Gastrocnemius medialis (tissue), 4 donors: ENCODE measurements at regions of chr5 and their contacts with region 1.

Region 1: DNA sequence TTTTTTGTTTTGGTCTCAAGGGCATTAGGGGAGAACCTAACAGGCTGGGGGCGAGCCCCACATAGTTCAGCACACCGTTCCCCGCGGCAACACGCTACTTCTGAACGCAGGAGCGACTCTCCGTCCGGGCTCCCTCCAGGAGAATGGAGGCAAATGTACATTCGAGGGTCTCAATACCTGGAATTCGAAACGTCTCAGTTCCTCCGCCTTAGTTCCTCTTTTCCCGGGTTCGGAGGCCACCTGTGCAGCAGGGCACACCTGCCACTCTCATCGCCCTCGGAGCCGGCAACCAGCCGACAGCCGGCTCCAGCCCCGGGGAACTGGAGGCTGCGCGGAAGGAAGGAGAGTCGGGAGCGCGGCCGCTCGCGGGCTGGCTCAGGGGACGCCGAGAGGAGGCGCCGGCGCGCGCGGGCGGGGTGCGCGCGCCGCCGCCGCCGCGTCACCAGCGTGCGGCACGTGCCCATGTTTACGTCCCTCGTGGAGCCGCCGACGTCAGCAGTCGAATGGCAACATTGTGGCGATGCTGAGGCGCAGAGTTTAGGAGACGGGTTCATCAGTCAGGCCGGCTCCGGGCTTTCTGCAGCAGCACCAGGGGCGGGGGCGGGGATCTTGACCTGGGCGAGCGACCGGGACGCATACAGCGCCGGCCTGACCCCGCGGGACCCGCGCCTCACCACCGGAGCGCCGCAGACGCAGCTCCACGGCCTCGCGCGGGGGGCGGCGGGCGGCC is at the start of gene JMY:
- DNase-seq: peak; percentile 78 to 81
- ATAC-seq: peak; percentile 83 to 86
- H3K4me3 ChIP-seq: peak within 1 kb of the TSS; percentile 70 to 96 (median 86)
- H3K27ac ChIP-seq: peak within 1 kb of the TSS; percentile 85 to 96 (median 95)
- H3K4me1 ChIP-seq: peaks cover 31 to 33% of the 10 kb centered on the region in 2 donors
- H3K27me3 ChIP-seq: no peaks in the 10 kb centered on the region
- CTCF ChIP-seq: peak in 1 of 5 experiments; percentile 37
- POLR2A ChIP-seq: peak; percentile 92 to 98
- total RNA-seq, gene JMY: 11.4 to 26.7 (median 16.8) TPM

Region 2: GRCh38 chr5:79301046-79301712 is 65.4 kb after region 1 on chr5:
- in situ Hi-C with region 1: no loop called
- intact Hi-C with region 1: no loop called
- DNase-seq: no peak
- ATAC-seq: no peak
- H3K4me3 ChIP-seq: no peak overlapping the region
- H3K27ac ChIP-seq: no peak overlapping the region
- H3K4me1 ChIP-seq: peaks cover 0 to 13% of the 10 kb centered on the region in 2 donors
- H3K27me3 ChIP-seq: no peaks in the 10 kb centered on the region
- CTCF ChIP-seq: no peak
- POLR2A ChIP-seq: no peak

Region 3: DNA sequence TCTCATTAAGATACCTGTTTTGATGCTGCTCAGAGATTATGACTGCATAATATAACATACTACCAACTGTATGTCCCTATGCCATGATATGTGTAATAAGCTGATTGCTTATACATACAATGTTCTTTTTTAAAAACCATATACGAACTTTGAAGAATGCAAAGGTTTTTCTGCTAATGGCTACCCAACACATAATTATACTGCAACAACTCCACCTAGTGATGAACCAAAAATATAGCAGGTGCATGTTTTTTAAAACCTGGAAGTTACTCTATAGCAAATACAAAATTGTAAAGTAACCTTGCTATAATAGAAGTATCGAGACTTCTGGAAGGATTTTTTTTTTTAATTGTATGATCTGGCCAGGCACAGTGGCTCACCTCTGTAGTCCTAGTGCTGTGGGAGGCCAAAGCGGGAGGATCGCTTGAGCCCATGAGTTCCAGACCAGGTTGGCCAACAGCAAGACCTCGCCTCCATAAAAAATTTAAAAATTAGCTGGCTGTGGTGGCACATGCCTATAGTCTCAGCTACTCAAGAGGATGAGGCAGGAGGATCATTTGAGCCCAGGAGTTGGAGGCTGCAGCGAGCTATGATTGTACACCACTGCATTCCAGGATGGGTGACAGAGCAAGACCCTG is 229.0 kb after region 1 on chr5:
- in situ Hi-C with region 1: loop called in 1 of 4 experiments (anchors 25 kb)
- intact Hi-C with region 1: loop called (anchors 5 kb)
- DNase-seq: no peak
- ATAC-seq: peak in 1 of 2 donors; percentile 60
- H3K4me3 ChIP-seq: no peak overlapping the region
- H3K27ac ChIP-seq: no peak overlapping the region
- H3K4me1 ChIP-seq: peaks cover 3 to 17% of the 10 kb centered on the region in 2 donors
- H3K27me3 ChIP-seq: no peaks in the 10 kb centered on the region
- CTCF ChIP-seq: peak in 4 of 5 experiments; percentile 18 to 60 (median 48)
- POLR2A ChIP-seq: no peak

Region 4: GRCh38 chr5:79514391-79515105 is 278.7 kb after region 1 on chr5:
- in situ Hi-C with region 1: no loop called
- intact Hi-C with region 1: loop called (anchors 1 kb)
- DNase-seq: peak; percentile 89 to 96
- ATAC-seq: peak; percentile 81 to 84
- H3K4me3 ChIP-seq: peak overlapping the region; percentile 78 to 91 (median 82)
- H3K27ac ChIP-seq: peak overlapping the region; percentile 93 to 97 (median 96)
- H3K4me1 ChIP-seq: peaks cover 9 to 18% of the 10 kb centered on the region in 2 donors
- H3K27me3 ChIP-seq: no peaks in the 10 kb centered on the region
- CTCF ChIP-seq: no peak
- POLR2A ChIP-seq: peak; percentile 34 to 97

Region 5: DNA sequence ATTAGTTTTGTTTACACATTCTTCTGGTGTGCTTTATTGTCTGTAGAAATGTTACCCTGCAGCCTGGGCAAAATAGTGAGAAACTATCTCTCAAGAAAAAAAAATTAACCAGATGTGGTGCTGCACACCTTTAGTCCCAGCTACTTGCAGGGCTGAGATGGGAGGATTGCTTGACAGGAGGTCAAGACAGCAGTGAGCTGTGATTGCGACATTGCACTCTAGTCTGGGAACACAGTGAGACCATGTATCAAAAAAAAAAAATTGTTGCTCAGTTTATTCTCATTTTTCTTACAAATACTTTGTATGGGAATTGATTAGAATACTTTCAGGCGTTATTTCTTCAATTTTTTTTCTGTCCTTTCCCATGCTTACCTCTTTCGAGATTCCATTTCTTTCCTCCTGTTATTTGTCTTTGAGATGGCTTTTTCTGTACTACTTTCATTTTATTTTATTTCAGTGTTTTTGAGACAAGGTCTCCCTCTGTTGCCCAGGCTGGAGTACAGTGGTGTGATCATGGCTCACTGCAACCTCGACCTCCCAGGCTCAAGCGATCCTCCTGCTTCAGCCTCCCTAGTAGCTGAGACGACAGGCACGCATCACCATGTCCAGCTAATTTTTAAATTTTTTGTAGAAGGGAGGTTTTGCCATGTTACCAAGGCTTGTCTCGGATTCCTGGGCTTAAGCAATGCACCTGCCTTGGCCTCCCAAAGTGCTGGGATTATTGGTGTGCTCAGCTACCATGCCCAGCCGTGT is 401.4 kb after region 1 on chr5:
- in situ Hi-C with region 1: loop called in 1 of 4 experiments (anchors 25 kb)
- intact Hi-C with region 1: no loop called
- DNase-seq: no peak
- ATAC-seq: no peak
- H3K4me3 ChIP-seq: no peak overlapping the region
- H3K27ac ChIP-seq: no peak overlapping the region
- H3K4me1 ChIP-seq: peaks cover 0 to 4% of the 10 kb centered on the region in 2 donors
- H3K27me3 ChIP-seq: no peaks in the 10 kb centered on the region
- CTCF ChIP-seq: no peak
- POLR2A ChIP-seq: no peak